ENCODE measurements at regions of chr5 and their contacts with region 1.

Region 1: GRCh38 chr5:143403593-143404415 is at the start of gene NR3C1:
- DNase-seq: peak; percentile 95
- H3K4me3 Mint-ChIP-seq: peak within 1 kb of the TSS; percentile 93
- H3K27ac Mint-ChIP-seq: peak within 1 kb of the TSS; percentile 98
- H3K4me1 Mint-ChIP-seq: peaks cover 44% of the 10 kb centered on the region
- H3K27me3 Mint-ChIP-seq: no peaks in the 10 kb centered on the region
- total RNA-seq, gene NR3C1: 62.2 and 64.7 TPM in 2 replicates

Region 2: GRCh38 chr5:143008809-143009521 is 394.8 kb before region 1 on chr5:
- intact Hi-C with region 1: loop called (anchors 1 kb)
- DNase-seq: peak; percentile 94
- H3K4me3 Mint-ChIP-seq: peak overlapping the region; percentile 36
- H3K27ac Mint-ChIP-seq: peak overlapping the region; percentile 93
- H3K4me1 Mint-ChIP-seq: peaks cover 73% of the 10 kb centered on the region
- H3K27me3 Mint-ChIP-seq: peaks cover 3% of the 10 kb centered on the region

Region 3: DNA sequence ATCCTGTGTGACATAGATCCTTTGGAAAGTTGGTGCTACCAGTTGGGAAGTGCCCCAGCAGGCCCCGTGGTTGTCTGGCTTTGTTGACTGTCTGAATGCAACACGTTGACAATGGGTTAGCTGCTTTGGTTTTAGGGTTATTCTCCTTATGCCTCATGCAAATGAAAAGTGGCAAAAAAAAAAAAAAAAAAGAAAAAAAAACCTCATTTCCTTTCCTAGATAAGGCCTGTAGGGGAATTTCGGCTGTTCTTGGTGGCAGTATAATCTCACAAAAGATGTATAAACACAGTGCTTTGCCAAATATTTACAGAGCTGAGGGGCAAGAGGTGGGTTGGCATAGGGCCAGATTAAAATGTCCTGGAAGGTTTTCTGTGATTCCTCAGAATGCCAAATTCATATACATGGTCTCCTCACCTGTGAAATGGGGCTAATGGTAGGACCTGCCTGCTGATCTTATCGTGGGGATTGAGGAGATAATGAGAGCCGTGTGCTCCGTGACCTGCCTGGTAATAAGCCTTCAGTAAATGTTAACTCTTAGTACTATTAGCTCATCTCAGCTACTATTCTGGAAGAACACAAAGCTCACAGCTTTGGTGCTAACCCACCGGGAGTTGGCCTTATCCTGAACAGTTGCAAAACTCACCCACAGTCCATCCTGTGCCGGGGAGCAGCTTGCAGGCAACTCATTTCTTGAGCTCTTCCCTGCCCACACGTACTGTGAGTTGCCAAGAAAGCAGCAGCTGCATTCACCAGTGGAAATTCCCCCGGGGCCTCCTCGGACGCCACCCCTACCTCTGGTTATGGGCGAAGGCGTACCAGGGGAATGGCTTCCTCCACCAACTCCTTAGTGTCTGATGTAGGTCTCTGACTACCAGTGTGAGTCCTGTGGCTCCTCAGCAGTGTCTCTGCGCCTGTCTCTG is 220.6 kb before region 1 on chr5:
- intact Hi-C with region 1: loop called (anchors 2 kb)
- DNase-seq: peak; percentile 85
- H3K4me3 Mint-ChIP-seq: peak overlapping the region; percentile 73
- H3K27ac Mint-ChIP-seq: peak overlapping the region; percentile 97
- H3K4me1 Mint-ChIP-seq: peaks cover 59% of the 10 kb centered on the region
- H3K27me3 Mint-ChIP-seq: no peaks in the 10 kb centered on the region

Region 4: GRCh38 chr5:143350751-143351603 is 52.8 kb before region 1 on chr5:
- intact Hi-C with region 1: loop called (anchors 1 kb)
- DNase-seq: no peak
- H3K4me3 Mint-ChIP-seq: no peak overlapping the region
- H3K27ac Mint-ChIP-seq: no peak overlapping the region
- H3K4me1 Mint-ChIP-seq: peaks cover 42% of the 10 kb centered on the region
- H3K27me3 Mint-ChIP-seq: no peaks in the 10 kb centered on the region

Region 5: DNA sequence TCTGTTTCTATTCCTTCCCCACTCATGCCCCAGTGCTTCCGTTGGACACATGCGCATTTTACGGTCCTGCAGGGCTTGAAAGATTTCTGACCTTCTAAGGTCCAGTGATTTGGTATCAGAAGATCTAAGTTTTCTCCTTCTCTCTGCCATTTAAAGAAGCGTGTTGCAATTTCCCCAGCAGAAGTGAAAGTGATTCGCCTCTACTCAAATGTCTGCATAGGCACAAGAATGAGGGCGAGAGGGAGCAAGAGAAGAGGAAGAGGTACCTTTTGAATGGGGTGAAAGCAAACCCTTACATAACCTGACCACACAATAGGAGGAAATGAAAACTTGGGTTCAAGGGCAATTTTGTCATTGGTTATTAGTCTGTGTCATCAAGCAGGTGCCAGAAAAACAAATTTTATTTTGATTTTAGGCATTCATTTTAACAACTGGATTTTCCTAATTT is 31.4 kb after region 1 on chr5:
- intact Hi-C with region 1: loop called (anchors 1 kb)
- DNase-seq: peak; percentile 79
- H3K4me3 Mint-ChIP-seq: peak overlapping the region; percentile 88
- H3K27ac Mint-ChIP-seq: peak overlapping the region; percentile 92
- H3K4me1 Mint-ChIP-seq: peaks cover 51% of the 10 kb centered on the region
- H3K27me3 Mint-ChIP-seq: no peaks in the 10 kb centered on the region

Region 6: GRCh38 chr5:143693651-143694252 is 289.9 kb after region 1 on chr5:
- intact Hi-C with region 1: loop called (anchors 5 kb)
- DNase-seq: peak; percentile 59
- H3K4me3 Mint-ChIP-seq: no peak overlapping the region
- H3K27ac Mint-ChIP-seq: peak overlapping the region; percentile 27
- H3K4me1 Mint-ChIP-seq: peaks cover 16% of the 10 kb centered on the region
- H3K27me3 Mint-ChIP-seq: peaks cover 7% of the 10 kb centered on the region

Region 7: DNA sequence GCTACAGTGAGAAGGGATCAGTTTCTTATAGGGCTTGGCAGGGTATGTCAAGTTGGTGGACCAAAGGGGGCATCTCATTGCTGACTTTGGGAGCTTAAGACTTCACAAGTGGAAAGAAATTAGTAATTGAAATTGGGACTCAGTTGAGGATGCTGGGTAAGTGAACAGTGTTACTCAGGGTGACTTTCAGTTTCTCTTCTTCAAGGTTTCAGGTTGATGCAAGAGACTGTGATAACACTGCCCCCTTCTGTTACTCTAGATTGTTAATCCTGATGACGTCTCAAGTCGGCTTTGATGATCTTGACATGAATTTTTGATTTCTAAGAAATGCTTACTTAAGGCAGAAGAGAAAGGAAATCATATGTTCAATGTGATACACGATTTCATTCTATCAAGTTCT is 788.2 kb after region 1 on chr5:
- intact Hi-C with region 1: loop called (anchors 2 kb)
- DNase-seq: peak; percentile 87
- H3K4me3 Mint-ChIP-seq: no peak overlapping the region
- H3K27ac Mint-ChIP-seq: no peak overlapping the region
- H3K4me1 Mint-ChIP-seq: peaks cover 39% of the 10 kb centered on the region
- H3K27me3 Mint-ChIP-seq: peaks cover 2% of the 10 kb centered on the region

Measured in activated CD4-positive, alpha-beta T cell treated with anti-CD3 and anti-CD28 coated beads, Interleukin-2, amount 10 ng/mL, durations not matched to agents 24 days and 14 days (primary cell).